SK-N-SH (cell line): ENCODE measurements at regions of chr12 and their contacts with region 1.

Region 1: DNA sequence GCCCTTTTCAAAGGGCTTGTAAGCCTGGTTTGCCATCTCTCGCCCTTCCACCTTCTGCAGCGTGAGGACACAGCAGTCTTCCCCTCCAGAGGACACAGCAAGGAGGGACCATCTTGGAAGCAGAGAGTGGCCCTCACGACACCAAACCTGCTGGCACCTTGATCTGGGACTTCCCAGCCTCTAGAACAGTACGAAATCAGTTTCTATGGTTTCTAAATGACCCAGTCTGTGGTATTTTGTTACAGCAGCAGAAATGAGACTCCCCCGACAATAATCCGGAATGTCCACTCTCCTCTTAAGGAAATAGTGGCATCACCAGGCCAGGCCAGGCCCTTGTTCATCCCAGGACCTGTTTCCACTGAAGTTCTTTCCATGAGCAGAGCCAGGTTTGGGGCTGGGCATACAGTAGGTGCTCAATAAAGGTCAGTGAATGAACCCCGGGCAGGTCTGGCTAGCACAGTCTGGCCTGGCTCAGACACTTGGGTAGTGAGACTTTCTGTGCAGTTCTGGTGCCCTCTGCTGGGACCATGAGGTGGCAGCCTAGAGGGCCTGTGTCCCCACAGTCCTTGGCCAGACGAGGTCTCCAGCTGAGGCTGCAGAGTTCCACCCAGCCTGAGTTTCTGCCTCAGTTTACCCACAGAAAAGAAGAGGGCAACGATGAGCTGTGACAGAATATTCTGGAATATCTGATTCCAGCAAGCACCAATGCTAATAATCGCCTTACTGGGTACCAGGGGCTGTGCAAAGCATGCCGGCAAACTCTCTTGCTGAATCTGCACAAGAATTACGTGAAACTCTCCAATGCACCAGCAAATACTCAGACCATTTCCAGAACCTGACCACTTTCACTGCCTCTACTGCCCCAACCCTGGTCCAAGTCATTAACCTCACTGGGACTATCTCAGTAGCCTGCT is 14.0 kb downstream of the ABCB9 start:
- DNase-seq: peak; percentile 36
- H3K4me3 ChIP-seq: no peak overlapping the region; a peak in 1 of 4 replicates
- H3K27ac ChIP-seq: peak overlapping the region in 1 of 2 experiments; percentile 57; a peak in 1 of 4 replicates
- H3K4me1 ChIP-seq: 0 out of 4 replicates have a peak, but pooled peaks cover 0 to 11% of the 10 kb centered on the region in 2 experiments
- H3K27me3 ChIP-seq: no peaks in the 10 kb centered on the region
- CTCF ChIP-seq: peak; percentile 83
- EP300 ChIP-seq: no peak
- RAD21 ChIP-seq: peak; percentile 98

Region 2: GRCh38 chr12:122825773-122826724 is 126.2 kb before region 1 on chr12:
- CTCF ChIA-PET with region 1: interaction called, 10 read pairs
- POLR2A ChIA-PET with region 1: no interaction called
- DNase-seq: peak; percentile 48
- H3K4me3 ChIP-seq: peak overlapping the region; percentile 36 to 58
- H3K27ac ChIP-seq: no peak overlapping the region
- H3K4me1 ChIP-seq: no peaks in the 10 kb centered on the region
- H3K27me3 ChIP-seq: no peaks in the 10 kb centered on the region
- CTCF ChIP-seq: no peak
- EP300 ChIP-seq: no peak
- RAD21 ChIP-seq: no peak

Region 3: GRCh38 chr12:122865268-122866231 is 86.7 kb before region 1 on chr12:
- CTCF ChIA-PET with region 1: interaction called, 148 read pairs
- POLR2A ChIA-PET with region 1: no interaction called
- DNase-seq: peak; percentile 79
- H3K4me3 ChIP-seq: no peak overlapping the region
- H3K27ac ChIP-seq: peak overlapping the region in 1 of 2 experiments; percentile 22; a peak in 1 of 4 replicates
- H3K4me1 ChIP-seq: peaks cover 0 to 16% of the 10 kb centered on the region in 2 experiments; a peak in 1 of 4 replicates
- H3K27me3 ChIP-seq: no peaks in the 10 kb centered on the region
- CTCF ChIP-seq: peak; percentile 54
- EP300 ChIP-seq: no peak
- RAD21 ChIP-seq: peak; percentile 36

Region 4: DNA sequence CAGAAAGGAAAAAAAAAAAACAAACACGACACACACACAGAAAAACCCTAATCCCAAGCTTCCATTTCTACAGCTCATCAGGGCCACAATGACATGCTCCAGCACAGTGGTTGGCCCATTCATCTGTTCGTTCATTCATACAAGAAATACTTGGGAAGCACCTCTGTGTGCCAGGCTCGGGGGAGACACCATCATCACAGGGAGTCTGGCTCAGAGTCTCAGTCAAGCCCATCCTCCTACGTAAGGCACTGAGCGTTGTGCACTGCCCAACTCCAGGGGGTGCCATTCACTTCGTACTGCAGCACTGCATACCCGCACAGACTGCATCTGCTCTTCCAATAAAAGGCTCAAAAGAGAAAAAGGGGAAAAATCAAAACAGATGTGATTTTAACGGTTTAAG is 71.6 kb before region 1 on chr12:
- CTCF ChIA-PET with region 1: interaction called, 12 read pairs
- POLR2A ChIA-PET with region 1: no interaction called
- DNase-seq: peak; percentile 71
- H3K4me3 ChIP-seq: no peak overlapping the region; a peak in 1 of 4 replicates
- H3K27ac ChIP-seq: no peak overlapping the region
- H3K4me1 ChIP-seq: peaks cover 4 to 28% of the 10 kb centered on the region in 2 experiments; a peak in 2 of 4 replicates
- H3K27me3 ChIP-seq: no peaks in the 10 kb centered on the region
- CTCF ChIP-seq: peak; percentile 57
- EP300 ChIP-seq: no peak
- RAD21 ChIP-seq: peak; percentile 67

Region 5: DNA sequence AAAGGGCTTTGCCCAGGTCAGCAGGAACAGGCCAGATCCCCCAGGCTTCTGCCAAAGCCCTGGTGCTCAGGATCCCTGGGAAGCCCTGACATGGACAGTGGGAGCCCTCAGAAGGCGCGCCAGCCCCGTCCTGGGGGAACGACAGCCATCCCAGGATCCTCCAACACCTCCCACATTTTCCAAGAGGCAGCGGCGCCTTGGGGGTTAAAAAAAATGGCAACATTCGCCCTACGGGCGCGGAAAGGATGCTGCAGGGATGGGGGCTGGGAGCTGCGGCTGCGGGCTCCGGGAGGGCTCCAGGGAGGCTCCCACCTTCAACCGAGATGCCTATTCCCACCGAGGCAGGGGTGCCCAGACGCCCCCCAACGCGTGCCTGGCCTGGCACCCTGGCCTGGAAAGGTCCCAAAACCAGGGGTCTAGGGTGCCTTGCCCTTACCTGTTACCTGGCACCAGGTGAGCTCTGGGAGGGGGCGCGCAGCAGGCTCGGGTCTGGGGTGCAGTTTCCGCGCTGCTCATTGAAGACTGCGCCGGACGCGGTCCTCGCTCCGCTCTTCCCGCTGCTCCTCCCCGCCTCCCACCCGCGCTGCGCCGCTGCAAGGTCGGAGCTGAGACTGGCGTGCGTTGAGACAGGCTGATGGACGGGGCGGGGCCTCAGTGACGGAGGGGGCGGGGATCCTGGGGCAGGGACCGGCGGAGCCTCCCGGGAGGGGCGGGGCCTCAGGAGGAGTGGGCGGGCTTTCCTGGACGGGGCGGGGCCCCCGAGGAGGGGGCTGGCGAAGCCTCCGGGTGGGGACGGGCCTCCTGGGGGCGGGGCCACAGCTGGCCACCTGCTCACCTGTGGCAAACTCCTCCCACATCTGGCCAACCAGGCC is 13.9 kb after region 1 on chr12 and contains the start of gene ABCB9:
- CTCF ChIA-PET with region 1: interaction called, 11 read pairs
- POLR2A ChIA-PET with region 1: interaction called, 3 read pairs
- DNase-seq: peak; percentile 99
- H3K4me3 ChIP-seq: peak within 1 kb of the TSS; percentile 73 to 90
- H3K27ac ChIP-seq: peak within 1 kb of the TSS in 1 of 2 experiments; percentile 45; a peak in 1 of 4 replicates
- H3K4me1 ChIP-seq: peaks cover 6 to 26% of the 10 kb centered on the region in 2 experiments; a peak in 2 of 4 replicates
- H3K27me3 ChIP-seq: no peaks in the 10 kb centered on the region
- CTCF ChIP-seq: no peak
- EP300 ChIP-seq: no peak
- RAD21 ChIP-seq: no peak
- polyA plus RNA-seq, gene ABCB9: 6.2 and 7.6 TPM in 2 replicates

Region 6: GRCh38 chr12:123095075-123096004 is 143.1 kb after region 1 on chr12:
- CTCF ChIA-PET with region 1: no interaction called
- POLR2A ChIA-PET with region 1: no interaction called
- DNase-seq: no peak
- H3K4me3 ChIP-seq: no peak overlapping the region
- H3K27ac ChIP-seq: peak overlapping the region in 1 of 2 experiments; percentile 53; a peak in 1 of 4 replicates
- H3K4me1 ChIP-seq: peaks cover 0 to 23% of the 10 kb centered on the region in 2 experiments; a peak in 1 of 4 replicates
- H3K27me3 ChIP-seq: no peaks in the 10 kb centered on the region
- CTCF ChIP-seq: no peak
- EP300 ChIP-seq: no peak
- RAD21 ChIP-seq: no peak

Region 7: DNA sequence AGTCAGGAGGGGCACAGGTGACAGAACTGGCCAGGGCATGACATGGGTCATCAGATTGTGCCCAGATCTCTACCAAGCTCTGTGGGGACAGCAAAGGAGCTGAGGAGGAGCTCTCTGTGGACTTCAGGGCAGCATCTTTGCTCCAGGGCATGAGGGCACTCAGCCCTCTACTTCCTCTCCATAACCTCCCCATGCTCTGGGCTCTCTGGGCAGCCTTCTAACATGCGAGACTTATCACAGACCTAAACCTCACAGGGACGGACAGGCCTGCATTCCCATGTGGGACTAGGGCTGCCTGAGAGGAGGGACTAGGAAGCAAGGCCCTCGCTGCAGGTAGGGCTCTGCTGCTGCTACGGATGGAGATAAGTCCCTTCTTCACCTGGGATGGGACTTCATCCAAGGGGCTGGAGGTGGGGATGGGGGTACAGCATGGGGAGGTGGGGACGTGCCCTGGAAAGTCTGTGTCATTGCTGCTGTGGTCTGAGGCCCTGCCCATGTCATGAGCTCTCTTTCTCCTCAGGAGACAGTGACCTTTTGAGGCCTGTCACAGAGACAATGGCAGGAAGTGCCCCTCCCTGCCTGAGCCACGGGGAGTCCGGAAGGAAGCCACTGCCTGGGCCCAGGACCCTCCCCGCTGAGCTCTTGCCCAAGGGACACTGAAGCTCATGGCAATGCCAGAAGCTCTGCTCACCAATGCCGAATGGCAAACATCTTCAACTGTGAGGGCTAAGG is 154.6 kb after region 1 on chr12:
- CTCF ChIA-PET with region 1: no interaction called
- POLR2A ChIA-PET with region 1: no interaction called
- DNase-seq: no peak
- H3K4me3 ChIP-seq: no peak overlapping the region
- H3K27ac ChIP-seq: no peak overlapping the region
- H3K4me1 ChIP-seq: peaks cover 0 to 5% of the 10 kb centered on the region in 2 experiments; a peak in 2 of 4 replicates
- H3K27me3 ChIP-seq: no peaks in the 10 kb centered on the region
- CTCF ChIP-seq: no peak
- EP300 ChIP-seq: no peak
- RAD21 ChIP-seq: no peak